Gastrocnemius medialis (tissue), 4 donors: ENCODE measurements at regions of chr2 and their contacts with region 1.

Region 1: DNA sequence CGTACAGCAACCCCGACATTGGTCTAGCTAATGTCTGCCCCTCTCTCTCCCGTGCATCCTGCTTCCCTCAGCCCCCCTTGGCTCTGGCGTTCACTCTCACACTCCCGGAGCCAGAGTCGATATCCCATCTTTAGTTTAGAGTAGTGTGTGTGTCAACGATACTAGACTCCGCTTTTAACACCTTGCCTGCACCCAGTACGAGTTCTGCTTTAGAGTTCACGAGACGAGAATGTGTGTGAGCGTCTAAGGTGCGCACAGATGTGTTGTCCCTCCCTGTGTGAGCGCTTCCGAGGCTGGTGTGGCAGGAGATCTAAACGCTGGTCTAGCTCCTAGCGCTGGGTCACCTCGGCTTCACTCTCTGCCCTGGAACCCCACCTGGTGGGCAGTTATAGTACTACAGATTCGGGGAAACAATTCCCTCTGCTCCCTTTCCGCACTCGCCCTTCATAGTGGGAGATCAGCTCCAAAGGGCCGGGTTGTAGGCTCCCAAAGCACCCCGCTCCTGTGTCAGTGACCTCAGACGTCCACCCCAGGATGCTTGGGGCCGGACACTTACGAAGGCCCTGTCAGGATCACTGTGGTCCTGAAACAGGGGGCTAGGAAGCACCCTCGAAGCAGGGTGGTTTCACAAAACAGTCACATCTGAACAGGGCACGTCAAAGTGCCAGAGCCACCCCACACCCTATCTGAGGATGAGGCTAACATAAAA is 2.6 kb upstream of the CYP26B1 start:
- DNase-seq: peak; percentile 61 to 69
- ATAC-seq: peak; percentile 78 to 84
- H3K4me3 ChIP-seq: peak overlapping the region in 3 of 4 donors; percentile 53 to 66 (median 55)
- H3K27ac ChIP-seq: no peak overlapping the region
- H3K4me1 ChIP-seq: peaks cover 38 to 49% of the 10 kb centered on the region in 2 donors
- H3K27me3 ChIP-seq: peaks cover 39 to 43% (median 41%) of the 10 kb centered on the region in 3 donors
- CTCF ChIP-seq: peak; percentile 82 to 92 (median 89)
- POLR2A ChIP-seq: no peak

Region 2: GRCh38 chr2:71452565-71452964 is 697.7 kb before region 1 on chr2:
- in situ Hi-C with region 1: no loop called
- intact Hi-C with region 1: loop called (anchors 10 kb)
- DNase-seq: peak; percentile 87 to 96
- ATAC-seq: peak; percentile 59 to 67
- H3K4me3 ChIP-seq: peak overlapping the region; percentile 62 to 83 (median 74)
- H3K27ac ChIP-seq: peak overlapping the region; percentile 92 to 99 (median 94)
- H3K4me1 ChIP-seq: peaks cover 66 to 70% of the 10 kb centered on the region in 2 donors
- H3K27me3 ChIP-seq: no peaks in the 10 kb centered on the region
- CTCF ChIP-seq: peak in 4 of 5 experiments; percentile 32 to 56 (median 48)
- POLR2A ChIP-seq: peak in 1 of 2 donors; percentile 23

Region 3: GRCh38 chr2:71545572-71546274 is 604.6 kb before region 1 on chr2:
- in situ Hi-C with region 1: loop called in 3 of 4 experiments (anchors 5 to 10 kb)
- intact Hi-C with region 1: loop called (anchors 1 kb)
- DNase-seq: peak in 1 of 2 donors; percentile 44
- ATAC-seq: peak; percentile 46 to 60
- H3K4me3 ChIP-seq: peak overlapping the region in 1 of 4 donors; percentile 30
- H3K27ac ChIP-seq: peak overlapping the region in 3 of 4 donors; percentile 46 to 69 (median 69)
- H3K4me1 ChIP-seq: no peaks in the 10 kb centered on the region
- H3K27me3 ChIP-seq: no peaks in the 10 kb centered on the region
- CTCF ChIP-seq: peak; percentile 46 to 74 (median 64)
- POLR2A ChIP-seq: no peak

Region 4: GRCh38 chr2:71798266-71799012 is 351.9 kb before region 1 on chr2:
- in situ Hi-C with region 1: loop called in 3 of 4 experiments (anchors 10 to 25 kb)
- intact Hi-C with region 1: loop called (anchors 1 kb)
- DNase-seq: peak in 1 of 2 donors; percentile 31
- ATAC-seq: peak; percentile 37 to 58
- H3K4me3 ChIP-seq: no peak overlapping the region
- H3K27ac ChIP-seq: no peak overlapping the region
- H3K4me1 ChIP-seq: peaks cover 6 to 14% of the 10 kb centered on the region in 2 donors
- H3K27me3 ChIP-seq: no peaks in the 10 kb centered on the region
- CTCF ChIP-seq: peak; percentile 68 to 87 (median 82)
- POLR2A ChIP-seq: no peak

Region 5: GRCh38 chr2:71923887-71924533 is 226.3 kb before region 1 on chr2:
- in situ Hi-C with region 1: loop called (anchors 5 to 10 kb)
- intact Hi-C with region 1: loop called (anchors 1 kb)
- DNase-seq: peak; percentile 42 to 70
- ATAC-seq: peak; percentile 90 to 95
- H3K4me3 ChIP-seq: no peak overlapping the region
- H3K27ac ChIP-seq: no peak overlapping the region
- H3K4me1 ChIP-seq: no peaks in the 10 kb centered on the region
- H3K27me3 ChIP-seq: no peaks in the 10 kb centered on the region
- CTCF ChIP-seq: peak; percentile 72 to 94 (median 90)
- POLR2A ChIP-seq: no peak

Region 6: GRCh38 chr2:71995067-71995665 is 155.1 kb before region 1 on chr2:
- in situ Hi-C with region 1: no loop called
- intact Hi-C with region 1: loop called (anchors 5 kb)
- DNase-seq: no peak
- ATAC-seq: peak; percentile 23 to 82
- H3K4me3 ChIP-seq: no peak overlapping the region
- H3K27ac ChIP-seq: no peak overlapping the region
- H3K4me1 ChIP-seq: no peaks in the 10 kb centered on the region
- H3K27me3 ChIP-seq: no peaks in the 10 kb centered on the region
- CTCF ChIP-seq: peak; percentile 63 to 79 (median 69)
- POLR2A ChIP-seq: no peak

Region 7: GRCh38 chr2:72129681-72130340 is 20.5 kb before region 1 on chr2:
- in situ Hi-C with region 1: no loop called
- intact Hi-C with region 1: no loop called
- DNase-seq: peak in 1 of 2 donors; percentile 9
- ATAC-seq: no peak
- H3K4me3 ChIP-seq: no peak overlapping the region
- H3K27ac ChIP-seq: no peak overlapping the region
- H3K4me1 ChIP-seq: no peaks in the 10 kb centered on the region
- H3K27me3 ChIP-seq: no peaks in the 10 kb centered on the region
- CTCF ChIP-seq: no peak
- POLR2A ChIP-seq: no peak

Region 8: DNA sequence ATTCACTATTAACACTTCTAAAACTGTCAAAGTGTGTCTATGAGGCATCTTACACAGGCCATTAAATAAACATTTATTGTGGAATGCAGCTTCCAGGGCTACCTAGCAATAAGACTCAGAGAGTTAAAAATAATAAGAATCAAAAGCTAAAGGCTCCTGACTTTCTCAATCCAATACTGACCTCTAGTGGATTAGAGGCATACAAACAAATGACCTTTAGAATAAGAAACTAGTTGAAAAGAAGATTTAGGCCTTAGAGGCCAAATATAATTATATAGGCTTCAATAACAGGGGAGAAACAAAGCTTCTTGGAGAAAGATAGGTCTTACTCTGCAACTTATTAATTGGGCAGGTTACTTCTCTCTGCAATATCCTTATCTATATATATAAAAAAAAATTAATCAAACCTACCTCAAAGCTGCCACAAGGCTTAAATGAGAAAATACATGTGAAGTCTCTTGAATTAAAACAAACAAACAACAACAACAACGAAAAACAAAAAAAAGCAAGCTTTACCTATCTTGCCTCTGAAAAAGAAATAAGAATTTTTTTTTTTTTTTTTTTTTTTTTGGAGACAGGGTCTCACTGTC is 429.4 kb after region 1 on chr2:
- in situ Hi-C with region 1: loop called in 3 of 4 experiments (anchors 25 kb)
- intact Hi-C with region 1: loop called (anchors 10 kb)
- DNase-seq: no peak
- ATAC-seq: peak in 1 of 2 donors; percentile 71
- H3K4me3 ChIP-seq: no peak overlapping the region
- H3K27ac ChIP-seq: no peak overlapping the region
- H3K4me1 ChIP-seq: peaks cover 0 to 9% of the 10 kb centered on the region in 2 donors
- H3K27me3 ChIP-seq: no peaks in the 10 kb centered on the region
- CTCF ChIP-seq: peak in 4 of 5 experiments; percentile 50 to 70 (median 59)
- POLR2A ChIP-seq: no peak